PC-3 (cell line): ENCODE measurements at regions of chr22 and their contacts with region 1.

Region 1: GRCh38 chr22:50341977-50342650 is 1.0 kb upstream of the PPP6R2 start:
- DNase-seq: peak; percentile 89
- ATAC-seq: peak; percentile 79
- H3K4me3 ChIP-seq: peak overlapping the region; percentile 80
- H3K27ac ChIP-seq: peak overlapping the region; percentile 71
- H3K4me1 ChIP-seq: no peaks in the 10 kb centered on the region
- H3K27me3 ChIP-seq: no peaks in the 10 kb centered on the region
- CTCF ChIP-seq: peak; percentile 87

Region 2: GRCh38 chr22:50218996-50219727 is 123.0 kb before region 1 on chr22:
- CTCF ChIA-PET with region 1: no interaction called
- POLR2A ChIA-PET with region 1: no interaction called
- intact Hi-C with region 1: no loop called
- DNase-seq: peak; percentile 51
- ATAC-seq: peak; percentile 51
- H3K4me3 ChIP-seq: no peak overlapping the region
- H3K27ac ChIP-seq: no peak overlapping the region
- H3K4me1 ChIP-seq: no peaks in the 10 kb centered on the region
- H3K27me3 ChIP-seq: no peaks in the 10 kb centered on the region
- CTCF ChIP-seq: no peak

Region 3: DNA sequence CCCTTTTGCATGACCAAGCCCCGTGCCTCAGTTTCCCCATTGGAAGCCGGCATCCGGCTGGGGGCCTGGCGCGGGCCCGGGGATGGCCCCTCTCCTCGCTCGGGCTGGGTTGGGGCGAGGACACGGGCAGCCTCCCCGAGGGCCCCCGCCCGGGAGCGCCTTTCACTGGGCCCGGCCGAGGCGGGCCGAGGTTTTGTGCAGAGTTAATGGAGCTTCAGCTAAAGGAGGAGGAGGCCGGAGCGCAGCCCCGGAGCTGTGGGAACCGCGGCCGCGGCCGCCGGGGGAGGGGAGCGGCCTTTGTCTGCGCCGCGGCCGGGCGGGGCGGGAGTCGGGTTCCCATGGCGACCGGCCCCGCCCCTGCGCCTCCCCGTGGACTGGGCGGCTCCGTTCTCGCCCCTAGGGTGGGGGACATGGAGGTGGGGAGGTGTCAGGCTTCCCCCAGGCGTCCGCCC is 70.6 kb before region 1 on chr22:
- CTCF ChIA-PET with region 1: no interaction called
- POLR2A ChIA-PET with region 1: no interaction called
- intact Hi-C with region 1: loop called (anchors 5 kb)
- DNase-seq: peak; percentile 56
- ATAC-seq: peak; percentile 31
- H3K4me3 ChIP-seq: peak overlapping the region; percentile 68
- H3K27ac ChIP-seq: no peak overlapping the region
- H3K4me1 ChIP-seq: peaks cover 11% of the 10 kb centered on the region
- H3K27me3 ChIP-seq: no peaks in the 10 kb centered on the region
- CTCF ChIP-seq: no peak

Region 4: GRCh38 chr22:50326959-50327710 is 15.0 kb before region 1 on chr22 and contains the start of gene DENND6B:
- CTCF ChIA-PET with region 1: no interaction called
- POLR2A ChIA-PET with region 1: no interaction called
- intact Hi-C with region 1: no loop called
- DNase-seq: peak; percentile 76
- ATAC-seq: peak; percentile 95
- H3K4me3 ChIP-seq: peak within 1 kb of the TSS; percentile 77
- H3K27ac ChIP-seq: peak within 1 kb of the TSS; percentile 52
- H3K4me1 ChIP-seq: peaks cover 17% of the 10 kb centered on the region
- H3K27me3 ChIP-seq: no peaks in the 10 kb centered on the region
- CTCF ChIP-seq: 0 out of 2 replicates have a peak, but pooled peaks have one; percentile 21
- total RNA-seq, gene DENND6B: 1.1 and 1.7 TPM in 2 replicates